CD4-positive, alpha-beta T cell (primary cell): ENCODE measurements at regions of chr1 and their contacts with region 1.

Region 1: DNA sequence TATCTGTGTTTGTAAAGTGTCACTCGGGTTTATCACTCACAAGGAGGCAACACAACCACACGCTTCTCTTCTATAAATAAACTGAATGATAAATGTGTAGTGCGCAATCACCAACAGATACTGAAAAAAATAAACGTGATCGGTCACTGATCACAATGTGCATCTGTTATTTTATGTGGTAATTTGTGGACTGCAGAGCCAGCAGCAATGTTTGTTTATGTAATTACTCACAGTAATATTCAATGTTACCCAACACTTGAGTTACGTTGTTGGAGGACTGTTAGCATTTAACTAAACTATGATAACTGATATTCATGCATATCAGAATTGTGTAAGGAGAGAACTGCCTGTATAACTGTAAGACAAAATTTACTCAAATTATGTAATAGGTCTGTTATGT is 129.6 kb downstream of the USH2A start:
- DNase-seq: no peak
- ATAC-seq: no peak
- H3K4me3 ChIP-seq: no peak overlapping the region
- H3K4me3 Mint-ChIP-seq: no peak overlapping the region
- H3K27ac ChIP-seq: no peak overlapping the region
- H3K27ac Mint-ChIP-seq: no peak overlapping the region
- H3K4me1 ChIP-seq: no peaks in the 10 kb centered on the region
- H3K4me1 Mint-ChIP-seq: no peaks in the 10 kb centered on the region
- H3K27me3 ChIP-seq: no peaks in the 10 kb centered on the region
- H3K27me3 Mint-ChIP-seq: no peaks in the 10 kb centered on the region
- CTCF ChIP-seq: no peak

Region 2: GRCh38 chr1:216044538-216044937 is 249.1 kb before region 1 on chr1:
- CTCF ChIA-PET with region 1: no interaction called
- POLR2A ChIA-PET with region 1: no interaction called
- intact Hi-C with region 1: no loop called
- DNase-seq: no peak
- ATAC-seq: no peak
- H3K4me3 ChIP-seq: no peak overlapping the region
- H3K4me3 Mint-ChIP-seq: no peak overlapping the region
- H3K27ac ChIP-seq: no peak overlapping the region
- H3K27ac Mint-ChIP-seq: no peak overlapping the region
- H3K4me1 ChIP-seq: no peaks in the 10 kb centered on the region
- H3K4me1 Mint-ChIP-seq: no peaks in the 10 kb centered on the region
- H3K27me3 ChIP-seq: no peaks in the 10 kb centered on the region
- H3K27me3 Mint-ChIP-seq: no peaks in the 10 kb centered on the region
- CTCF ChIP-seq: no peak

Region 3: DNA sequence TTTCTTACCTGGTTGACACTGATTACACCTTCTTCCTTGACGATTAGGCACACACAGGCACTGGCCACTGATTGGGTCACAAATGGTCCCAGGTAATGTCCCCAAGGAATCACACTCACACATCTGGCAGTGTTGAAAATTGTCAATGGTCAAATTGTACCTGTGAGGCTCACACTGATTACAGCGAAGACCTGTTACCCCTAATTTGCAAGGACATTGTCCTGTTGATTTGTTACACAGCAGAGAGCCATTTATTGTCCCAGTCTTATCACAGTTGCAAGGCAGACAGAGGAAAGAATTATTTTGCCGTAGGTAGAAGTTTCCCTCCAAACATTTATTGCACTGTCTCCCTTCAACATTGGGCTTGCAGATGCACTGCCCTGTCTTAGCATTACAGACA is 47.1 kb before region 1 on chr1:
- CTCF ChIA-PET with region 1: no interaction called
- POLR2A ChIA-PET with region 1: no interaction called
- intact Hi-C with region 1: loop called in 1 of 2 experiments (anchors 5 kb)
- DNase-seq: no peak
- ATAC-seq: no peak
- H3K4me3 ChIP-seq: no peak overlapping the region
- H3K4me3 Mint-ChIP-seq: no peak overlapping the region
- H3K27ac ChIP-seq: no peak overlapping the region
- H3K27ac Mint-ChIP-seq: no peak overlapping the region
- H3K4me1 ChIP-seq: no peaks in the 10 kb centered on the region
- H3K4me1 Mint-ChIP-seq: no peaks in the 10 kb centered on the region
- H3K27me3 ChIP-seq: no peaks in the 10 kb centered on the region
- H3K27me3 Mint-ChIP-seq: no peaks in the 10 kb centered on the region
- CTCF ChIP-seq: no peak